Right cardiac atrium (tissue), 5 donors: ENCODE measurements at regions of chr13 and their contacts with region 1.

Region 1: GRCh38 chr13:110944121-110944967 is 29.5 kb upstream of the ANKRD10 start:
- DNase-seq: no peak
- ATAC-seq: peak; percentile 65 to 76
- H3K4me3 ChIP-seq: no peak overlapping the region
- H3K27ac ChIP-seq: peak overlapping the region; percentile 63
- H3K4me1 ChIP-seq: peaks cover 5% of the 10 kb centered on the region
- H3K27me3 ChIP-seq: no peaks in the 10 kb centered on the region

Region 2: GRCh38 chr13:111031531-111031961 is 87.2 kb after region 1 on chr13:
- intact Hi-C with region 1: loop called in 1 of 4 experiments (anchors 10 kb)
- DNase-seq: no peak
- ATAC-seq: no peak
- H3K4me3 ChIP-seq: no peak overlapping the region
- H3K27ac ChIP-seq: no peak overlapping the region
- H3K4me1 ChIP-seq: no peaks in the 10 kb centered on the region
- H3K27me3 ChIP-seq: no peaks in the 10 kb centered on the region

Region 3: DNA sequence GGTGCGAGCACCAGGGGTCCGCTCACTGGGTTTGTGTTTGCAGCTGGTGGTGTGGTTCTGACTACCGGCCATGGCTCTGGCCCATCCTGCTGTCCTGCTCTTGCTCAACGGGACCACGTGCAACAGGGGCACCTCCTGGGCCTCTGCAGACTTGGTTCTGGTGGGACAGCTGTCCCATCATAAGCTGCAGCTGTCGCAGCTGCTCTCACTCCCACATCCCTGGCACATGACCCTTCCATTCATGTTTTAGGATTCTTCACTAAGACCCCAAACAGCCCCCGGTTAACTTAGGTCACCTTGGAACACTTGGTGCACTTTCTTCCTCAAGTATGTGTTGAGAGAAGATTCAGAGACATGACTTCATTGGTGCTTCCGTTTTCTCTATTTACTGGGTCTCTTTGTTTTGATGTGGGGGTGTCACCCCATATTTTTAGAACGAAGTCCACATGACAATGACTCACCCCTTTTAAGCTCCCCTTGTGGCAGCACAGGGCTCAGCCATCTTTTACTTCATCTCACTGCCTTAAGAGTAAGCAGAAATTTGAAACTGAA is 102.3 kb after region 1 on chr13:
- intact Hi-C with region 1: loop called in 2 of 4 experiments (anchors 10 kb)
- DNase-seq: peak in 1 of 3 donors; percentile 67
- ATAC-seq: peak; percentile 30 to 34
- H3K4me3 ChIP-seq: no peak overlapping the region
- H3K27ac ChIP-seq: no peak overlapping the region
- H3K4me1 ChIP-seq: no peaks in the 10 kb centered on the region
- H3K27me3 ChIP-seq: no peaks in the 10 kb centered on the region